OCI-LY7 (cell line): ENCODE measurements at regions of chr3 and their contacts with region 1.

Region 1: DNA sequence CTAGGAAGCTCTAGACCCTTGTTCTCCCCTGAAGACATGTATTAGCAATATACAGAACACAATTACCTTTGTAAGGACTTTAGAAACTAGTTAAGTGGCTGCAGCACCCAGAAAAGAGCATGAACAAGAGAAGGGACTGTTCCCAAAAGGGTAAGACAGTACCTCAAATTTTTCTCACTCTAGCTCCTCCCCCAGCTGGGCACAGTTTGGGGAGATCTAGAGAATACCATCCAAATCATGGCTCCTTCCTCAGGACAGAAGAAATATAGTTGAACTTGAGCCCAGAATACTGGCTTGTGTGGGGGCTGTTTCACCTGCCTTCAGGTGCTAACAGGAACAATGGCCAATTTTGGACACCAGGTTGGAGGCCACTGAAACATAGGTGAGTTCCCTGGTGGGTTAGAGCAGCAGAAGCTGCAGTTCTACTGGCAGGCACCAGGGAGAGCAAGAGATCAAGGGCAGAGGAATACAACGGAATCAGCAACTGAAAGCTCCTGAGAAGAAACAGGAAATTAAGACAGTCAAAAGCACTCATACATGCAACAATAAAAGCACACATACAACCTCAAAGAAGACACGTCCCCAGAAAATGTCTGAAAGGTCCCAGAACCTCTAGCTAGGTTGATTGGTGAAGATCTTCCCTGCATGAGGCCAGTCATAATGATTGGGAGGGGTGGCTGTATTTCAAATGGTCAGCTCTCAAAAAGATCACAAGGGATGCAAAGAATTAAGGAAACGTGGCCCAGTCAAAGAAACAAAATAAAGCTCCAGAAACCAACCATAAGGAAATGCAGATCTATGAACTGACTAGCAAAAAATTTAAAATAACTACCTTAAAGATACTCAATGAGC is 104.9 kb upstream of the ASB14 start:
- DNase-seq: peak; percentile 84
- H3K4me3 ChIP-seq: peak overlapping the region; percentile 17
- H3K27ac ChIP-seq: no peak overlapping the region
- H3K4me1 ChIP-seq: peaks cover 5% of the 10 kb centered on the region
- CTCF ChIP-seq: peak; percentile 96

Region 2: GRCh38 chr3:57582474-57583168 is 185.2 kb after region 1 on chr3:
- CTCF ChIA-PET with region 1: no interaction called
- POLR2A ChIA-PET with region 1: no interaction called
- intact Hi-C with region 1: loop called (anchors 5 kb)
- DNase-seq: peak; percentile 72
- H3K4me3 ChIP-seq: no peak overlapping the region
- H3K27ac ChIP-seq: peak overlapping the region; percentile 27
- H3K4me1 ChIP-seq: peaks cover 13% of the 10 kb centered on the region
- CTCF ChIP-seq: peak; percentile 77

Region 3: GRCh38 chr3:57696801-57697321 is 299.5 kb after region 1 on chr3:
- CTCF ChIA-PET with region 1: no interaction called
- POLR2A ChIA-PET with region 1: no interaction called
- intact Hi-C with region 1: no loop called
- DNase-seq: no peak
- H3K4me3 ChIP-seq: no peak overlapping the region
- H3K27ac ChIP-seq: no peak overlapping the region
- H3K4me1 ChIP-seq: peaks cover 4% of the 10 kb centered on the region
- CTCF ChIP-seq: no peak

Region 4: DNA sequence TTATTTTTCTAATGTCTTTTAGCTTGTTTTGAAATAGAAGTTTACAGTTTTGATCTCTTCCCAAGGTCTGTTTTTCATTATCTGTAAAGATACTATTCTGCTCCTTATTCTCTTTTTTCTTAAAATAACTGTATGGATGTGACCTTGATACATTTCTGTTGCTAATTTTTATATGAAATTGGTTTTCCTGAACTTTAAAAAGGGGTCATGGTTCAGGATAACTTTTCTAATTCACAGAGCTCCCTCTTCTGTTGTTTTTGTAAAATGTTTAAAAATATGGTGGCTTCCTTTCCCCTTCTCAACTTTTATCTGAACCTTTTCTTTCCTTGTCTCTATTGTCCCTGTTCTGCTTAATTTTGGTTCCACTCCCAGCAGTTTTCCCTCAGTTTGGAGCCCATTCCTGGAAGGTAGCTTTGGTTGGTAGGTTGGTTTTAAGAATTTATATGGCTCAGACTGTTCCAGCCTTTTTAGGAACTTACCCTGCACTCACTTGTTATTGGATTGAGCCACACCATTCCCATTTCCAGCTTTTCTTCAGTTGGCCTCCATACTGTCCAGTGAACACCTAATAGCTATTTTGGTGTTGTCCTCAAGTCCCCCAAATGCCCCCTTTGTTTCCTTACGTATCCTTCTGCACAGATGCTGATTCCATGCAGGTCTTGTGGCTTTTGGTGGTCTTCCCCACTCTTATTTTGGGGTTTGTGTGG is 429.0 kb after region 1 on chr3:
- CTCF ChIA-PET with region 1: no interaction called
- POLR2A ChIA-PET with region 1: no interaction called
- intact Hi-C with region 1: loop called (anchors 5 kb)
- DNase-seq: no peak
- H3K4me3 ChIP-seq: no peak overlapping the region
- H3K27ac ChIP-seq: no peak overlapping the region
- H3K4me1 ChIP-seq: peaks cover 15% of the 10 kb centered on the region
- CTCF ChIP-seq: peak; percentile 68

Region 5: DNA sequence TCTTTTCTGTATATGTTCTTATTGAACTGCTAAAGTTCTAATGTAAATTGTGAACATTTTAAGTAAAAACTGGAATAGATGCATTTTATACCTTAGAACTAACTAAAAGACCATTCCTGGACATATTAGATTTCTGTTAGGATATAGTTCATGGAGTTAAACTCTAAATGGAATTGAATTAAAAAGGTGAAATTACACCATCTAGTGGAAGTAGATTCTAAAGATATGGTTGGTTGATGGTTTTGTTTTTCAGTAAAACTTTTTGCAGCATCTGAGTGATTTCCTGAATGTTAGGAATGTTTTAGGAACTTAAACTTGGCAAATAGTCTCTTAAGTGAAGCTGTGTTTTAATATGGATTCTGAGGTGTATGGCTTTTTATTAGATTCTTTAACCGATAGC is 455.5 kb after region 1 on chr3:
- CTCF ChIA-PET with region 1: interaction called, 3 read pairs
- POLR2A ChIA-PET with region 1: interaction called, 3 read pairs
- intact Hi-C with region 1: loop called (anchors 5 kb)
- DNase-seq: peak; percentile 9
- H3K4me3 ChIP-seq: no peak overlapping the region
- H3K27ac ChIP-seq: no peak overlapping the region
- H3K4me1 ChIP-seq: no peaks in the 10 kb centered on the region
- CTCF ChIP-seq: peak; percentile 74